H1 (cell line): ENCODE measurements at regions of chr12 and their contacts with region 1.

Region 1: DNA sequence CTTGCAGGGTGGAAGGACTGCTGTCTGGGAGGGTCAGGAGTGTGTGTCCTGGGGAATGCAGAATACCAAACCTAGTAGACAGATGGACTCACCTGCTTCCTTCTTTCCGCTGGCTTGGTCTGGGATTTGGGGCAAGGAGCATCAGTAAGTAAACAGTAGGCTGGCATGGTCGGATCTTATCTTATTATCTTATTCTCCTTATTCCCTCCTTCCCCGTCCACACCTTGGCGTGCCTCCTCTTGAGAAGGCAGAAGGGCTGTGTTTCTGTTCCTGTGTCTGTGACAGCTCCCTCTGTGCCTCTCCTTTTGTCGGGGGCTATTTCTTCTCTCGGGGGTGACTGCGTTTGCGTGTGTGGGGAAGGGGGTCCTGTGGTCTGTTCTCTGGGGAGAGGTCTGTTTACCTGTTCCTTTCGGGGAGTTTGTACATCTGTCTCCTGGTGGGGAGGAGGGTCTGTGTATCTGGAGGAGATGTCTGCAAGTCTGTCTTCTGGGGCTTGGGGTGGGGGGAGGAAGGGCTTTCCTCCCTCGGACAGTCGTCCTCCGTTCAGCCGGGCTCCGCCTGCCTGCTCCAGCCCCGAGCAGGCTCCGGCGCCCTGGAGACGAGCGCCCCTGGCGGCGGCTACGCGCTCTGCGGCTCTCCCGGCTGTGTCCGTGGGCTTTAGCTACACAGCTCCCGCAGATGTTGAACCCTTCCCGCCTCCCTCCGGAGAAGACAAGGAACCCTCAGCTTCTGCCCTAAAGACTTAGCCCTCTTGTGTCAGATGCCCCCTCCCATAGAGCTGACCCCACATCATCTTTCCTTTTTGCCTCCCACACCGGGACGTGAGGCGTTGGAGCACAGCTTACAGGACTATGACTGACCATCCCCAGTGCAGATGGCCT is 4.3 kb downstream of the KRT86 start:
- DNase-seq: peak; percentile 33 to 96
- H3K4me3 ChIP-seq: peak overlapping the region; percentile 18 to 57 (median 32); a peak in 5 of 8 replicates
- H3K27ac ChIP-seq: no peak overlapping the region
- H3K4me1 ChIP-seq: peaks cover 0 to 4% (median 0%) of the 10 kb centered on the region in 4 experiments; a peak in 1 of 7 replicates
- H3K27me3 ChIP-seq: peaks cover 0 to 12% (median 5%) of the 10 kb centered on the region in 4 experiments; a peak in 4 of 7 replicates
- CTCF ChIP-seq: peak; percentile 93 to 96 (median 95)
- EP300 ChIP-seq: no peak
- POLR2A ChIP-seq: no peak
- RAD21 ChIP-seq: peak; percentile 70 to 80

Region 2: GRCh38 chr12:52156736-52157565 is 121.8 kb before region 1 on chr12:
- CTCF ChIA-PET with region 1: interaction called, 11 read pairs
- POLR2A ChIA-PET with region 1: no interaction called
- DNase-seq: peak in 1 of 2 experiments; percentile 98
- H3K4me3 ChIP-seq: no peak overlapping the region
- H3K27ac ChIP-seq: no peak overlapping the region
- H3K4me1 ChIP-seq: 0 out of 7 replicates have a peak, but pooled peaks cover 0 to 2% (median under 1%) of the 10 kb centered on the region in 4 experiments
- H3K27me3 ChIP-seq: peaks cover 0 to 4% (median 2%) of the 10 kb centered on the region in 4 experiments; a peak in 2 of 7 replicates
- CTCF ChIP-seq: peak in 2 of 3 experiments; percentile 98; a peak in 3 of 4 replicates
- EP300 ChIP-seq: no peak
- POLR2A ChIP-seq: no peak
- RAD21 ChIP-seq: peak; percentile 100

Region 3: DNA sequence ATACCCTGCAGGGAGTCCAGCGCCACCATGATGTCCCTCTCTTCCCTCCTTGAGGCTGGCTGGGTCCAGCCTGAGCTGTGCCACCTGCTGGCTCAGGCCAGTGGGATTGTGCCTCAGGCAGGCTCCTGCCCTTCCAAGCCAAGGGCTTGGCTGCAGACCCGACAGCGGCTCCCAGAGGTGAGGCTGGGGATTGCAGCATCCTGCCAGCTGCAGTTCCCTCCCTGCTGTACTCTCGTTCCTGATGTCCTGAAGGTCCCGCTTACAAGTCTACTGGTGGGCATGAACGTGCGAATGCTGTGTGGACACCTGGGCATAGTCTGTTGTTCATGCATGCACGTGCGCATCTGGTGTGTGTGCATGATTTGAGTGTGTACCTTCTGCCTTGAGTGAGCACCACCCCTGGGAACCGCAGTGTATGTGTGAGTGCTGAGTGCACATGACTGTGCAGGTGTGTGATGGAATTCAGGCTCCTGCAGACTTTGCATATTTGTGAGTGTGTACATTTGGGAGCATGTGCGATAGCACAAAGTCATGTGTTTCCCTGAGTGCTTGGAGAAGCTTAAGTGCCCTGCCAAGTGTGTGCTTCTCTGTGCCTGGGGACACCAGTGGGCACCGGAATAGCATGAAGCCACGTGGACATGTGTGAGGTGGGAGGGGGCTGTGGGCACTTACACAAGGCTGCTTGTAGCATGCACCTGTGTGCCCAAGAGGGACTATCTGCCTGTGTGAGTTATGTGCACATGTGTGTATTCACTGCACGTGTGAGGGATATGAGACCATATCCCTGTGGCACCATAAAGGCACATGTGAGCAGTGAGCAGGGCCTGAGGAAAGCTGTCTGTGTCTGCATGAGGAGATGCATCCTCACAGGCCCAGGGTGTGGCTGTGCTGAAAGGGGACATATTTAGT is 65.0 kb before region 1 on chr12:
- CTCF ChIA-PET with region 1: interaction called, 65 read pairs
- POLR2A ChIA-PET with region 1: no interaction called
- DNase-seq: peak; percentile 85 to 99
- H3K4me3 ChIP-seq: no peak overlapping the region
- H3K27ac ChIP-seq: no peak overlapping the region
- H3K4me1 ChIP-seq: peaks cover 0 to 4% (median under 1%) of the 10 kb centered on the region in 4 experiments; a peak in 4 of 7 replicates
- H3K27me3 ChIP-seq: no peaks in the 10 kb centered on the region
- CTCF ChIP-seq: peak; percentile 94 to 100 (median 99)
- EP300 ChIP-seq: no peak
- POLR2A ChIP-seq: no peak
- RAD21 ChIP-seq: peak; percentile 91 to 95

Region 4: GRCh38 chr12:52235822-52236692 is 42.7 kb before region 1 on chr12:
- CTCF ChIA-PET with region 1: interaction called, 34 read pairs
- POLR2A ChIA-PET with region 1: interaction called, 3 read pairs
- DNase-seq: no peak
- H3K4me3 ChIP-seq: no peak overlapping the region
- H3K27ac ChIP-seq: no peak overlapping the region
- H3K4me1 ChIP-seq: peaks cover 14 to 40% (median 25%) of the 10 kb centered on the region in 4 experiments
- H3K27me3 ChIP-seq: peaks cover 0 to 43% (median 21%) of the 10 kb centered on the region in 4 experiments; a peak in 6 of 7 replicates
- CTCF ChIP-seq: no peak
- EP300 ChIP-seq: no peak
- POLR2A ChIP-seq: no peak
- RAD21 ChIP-seq: no peak

Region 5: GRCh38 chr12:52268212-52268611 is 10.6 kb before region 1 on chr12:
- CTCF ChIA-PET with region 1: interaction called, 87 read pairs
- POLR2A ChIA-PET with region 1: interaction called, 5 read pairs
- DNase-seq: no peak
- H3K4me3 ChIP-seq: no peak overlapping the region
- H3K27ac ChIP-seq: no peak overlapping the region
- H3K4me1 ChIP-seq: no peaks in the 10 kb centered on the region
- H3K27me3 ChIP-seq: no peaks in the 10 kb centered on the region; a peak in 1 of 7 replicates
- CTCF ChIP-seq: no peak
- EP300 ChIP-seq: no peak
- POLR2A ChIP-seq: no peak
- RAD21 ChIP-seq: no peak

Region 6: GRCh38 chr12:52319097-52319496 is 40.3 kb after region 1 on chr12:
- CTCF ChIA-PET with region 1: interaction called, 39 read pairs
- POLR2A ChIA-PET with region 1: interaction called, 3 read pairs
- DNase-seq: no peak
- H3K4me3 ChIP-seq: no peak overlapping the region
- H3K27ac ChIP-seq: no peak overlapping the region
- H3K4me1 ChIP-seq: no peaks in the 10 kb centered on the region
- H3K27me3 ChIP-seq: no peaks in the 10 kb centered on the region
- CTCF ChIP-seq: peak; percentile 4 to 40 (median 18)
- EP300 ChIP-seq: no peak
- POLR2A ChIP-seq: no peak
- RAD21 ChIP-seq: peak; percentile 23 to 53; a peak in 3 of 4 replicates